Naive thymus-derived CD4-positive, alpha-beta T cell (primary cell): ENCODE measurements at regions of chr1 and their contacts with region 1.

Region 1: DNA sequence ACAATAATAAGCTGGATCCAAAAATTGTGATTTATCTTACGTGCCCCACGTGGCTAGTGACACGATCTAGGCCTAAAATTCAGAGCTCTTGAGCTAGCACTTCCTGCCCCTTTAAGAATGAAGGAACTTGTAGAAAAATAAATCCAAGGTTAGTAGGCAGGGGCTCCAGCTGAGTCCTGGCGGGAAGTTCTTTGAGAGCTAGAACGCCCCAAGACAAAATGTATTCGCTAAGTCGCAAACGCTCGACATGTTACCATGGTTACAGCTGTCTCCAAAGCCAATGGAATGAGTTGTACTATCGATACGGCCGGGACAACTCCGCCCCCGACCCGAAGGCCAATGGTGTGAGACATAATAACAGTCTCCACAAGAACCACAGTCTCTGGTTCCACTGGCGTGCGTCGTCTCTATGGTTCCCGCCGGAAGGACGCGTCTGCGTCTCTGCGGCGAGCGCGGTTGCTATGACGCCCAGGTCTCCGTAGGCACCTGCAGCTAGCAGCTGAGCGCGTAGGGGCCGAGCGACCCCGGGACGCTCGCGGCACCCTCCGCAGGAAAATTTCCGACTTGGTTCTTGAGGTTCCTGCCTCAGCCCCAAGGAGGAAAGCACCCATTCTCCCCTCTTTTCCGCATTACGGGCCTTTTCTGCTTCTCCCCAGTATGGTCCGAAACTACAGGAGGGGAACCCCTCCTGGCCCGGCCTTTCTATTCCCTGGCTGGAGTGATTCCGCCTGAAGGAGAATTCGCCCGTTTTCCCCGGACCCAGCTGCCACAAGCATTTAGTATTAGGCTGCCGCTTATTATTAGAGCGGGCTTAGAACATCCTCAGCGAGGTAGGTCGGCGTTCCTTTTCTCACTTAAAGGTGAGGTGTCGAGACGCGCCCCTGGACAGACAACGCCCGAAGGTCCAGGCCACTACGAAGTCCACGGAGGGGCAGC is at the start of gene CCDC30:
- DNase-seq: peak; percentile 75 to 99 (median 98)
- ATAC-seq: peak; percentile 99
- H3K4me3 ChIP-seq: peak within 1 kb of the TSS; percentile 50
- H3K4me3 Mint-ChIP-seq: peak within 1 kb of the TSS; percentile 74 to 92 (median 86)
- H3K27ac ChIP-seq: peak within 1 kb of the TSS; percentile 86
- H3K27ac Mint-ChIP-seq: peak within 1 kb of the TSS; percentile 87 to 98 (median 93)
- H3K4me1 ChIP-seq: peaks cover 14 to 18% of the 10 kb centered on the region in 2 donors
- H3K4me1 Mint-ChIP-seq: peaks cover 14 to 57% (median 49%) of the 10 kb centered on the region in 7 donors
- H3K27me3 ChIP-seq: no peaks in the 10 kb centered on the region
- H3K27me3 Mint-ChIP-seq: peaks cover 0 to 20% (median 0%) of the 10 kb centered on the region in 5 donors
- total RNA-seq, gene CCDC30: 2.3 to 5.3 (median 4.2) TPM

Region 2: DNA sequence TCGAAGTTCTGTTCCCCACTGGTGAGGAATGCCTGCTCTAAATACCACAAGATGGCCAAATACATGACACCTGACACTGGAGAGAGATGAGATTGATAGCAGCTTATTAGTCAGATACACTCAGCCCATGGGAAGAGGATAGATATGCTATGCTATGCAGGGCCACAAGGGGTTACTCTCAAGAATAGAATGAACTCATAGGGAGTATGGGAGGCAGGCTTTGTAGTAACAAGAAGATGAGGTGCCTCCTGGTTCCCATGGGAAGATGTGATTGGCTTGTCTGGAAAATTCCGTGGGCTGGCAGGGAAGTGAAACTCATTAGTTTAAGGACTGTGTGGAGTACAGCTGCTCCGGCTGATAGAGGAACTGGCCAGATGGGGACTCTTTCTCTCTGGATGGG is 16.5 kb after region 1 on chr1:
- CTCF ChIA-PET with region 1: no interaction called
- POLR2A ChIA-PET with region 1: no interaction called
- intact Hi-C with region 1: no loop called
- DNase-seq: no peak
- ATAC-seq: no peak
- H3K4me3 ChIP-seq: no peak overlapping the region
- H3K4me3 Mint-ChIP-seq: no peak overlapping the region
- H3K27ac ChIP-seq: no peak overlapping the region
- H3K27ac Mint-ChIP-seq: no peak overlapping the region
- H3K4me1 ChIP-seq: no peaks in the 10 kb centered on the region
- H3K4me1 Mint-ChIP-seq: peaks cover 0 to 2% (median 0%) of the 10 kb centered on the region in 7 donors
- H3K27me3 ChIP-seq: no peaks in the 10 kb centered on the region
- H3K27me3 Mint-ChIP-seq: no peaks in the 10 kb centered on the region

Region 3: DNA sequence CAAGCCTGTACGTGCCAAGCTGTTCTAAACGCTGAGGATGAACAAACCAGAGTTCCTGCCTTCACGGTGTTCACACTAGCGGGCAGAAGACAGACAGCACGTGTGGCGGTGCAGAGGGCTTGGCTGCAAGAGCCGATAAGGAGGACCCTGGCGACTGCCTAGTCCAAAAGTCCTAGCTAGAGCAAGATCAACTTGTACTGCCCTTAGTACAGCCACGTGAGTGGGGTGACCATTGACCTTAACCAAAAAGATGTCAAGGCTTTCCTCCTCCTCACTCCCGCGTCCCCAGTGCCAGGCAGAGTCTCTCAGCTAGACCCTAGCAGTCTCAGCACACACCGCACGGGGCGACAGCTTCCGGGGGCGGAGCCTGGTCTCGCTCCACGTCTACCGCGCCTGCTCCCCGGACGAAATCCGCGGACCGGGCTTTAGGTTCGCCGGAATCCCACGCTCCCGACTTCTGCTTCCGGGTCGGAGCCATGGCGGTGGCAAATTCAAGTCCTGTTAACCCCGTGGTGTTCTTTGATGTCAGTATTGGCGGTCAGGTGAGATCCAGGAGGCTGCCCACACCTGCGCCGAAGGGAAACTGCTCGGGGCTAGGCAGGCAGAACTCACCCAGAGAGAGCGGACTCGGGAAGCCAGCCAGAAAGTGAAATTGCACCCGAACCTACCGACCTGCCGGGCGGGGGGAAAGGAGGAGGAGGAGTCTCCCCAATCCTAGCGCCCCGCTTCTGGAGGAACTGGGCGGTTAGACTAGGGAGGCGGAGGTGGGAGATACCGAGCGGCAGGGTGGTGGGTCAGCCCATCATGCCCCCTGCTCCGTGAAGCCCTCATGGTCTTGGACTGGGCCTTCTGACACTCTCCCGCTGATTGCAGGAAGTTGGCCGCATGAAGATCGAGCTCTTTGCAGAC is 195.1 kb after region 1 on chr1 and contains the start of gene PPIH:
- CTCF ChIA-PET with region 1: no interaction called
- POLR2A ChIA-PET with region 1: interaction called, 4 read pairs
- intact Hi-C with region 1: loop called (anchors 1 to 2 kb)
- DNase-seq: peak; percentile 82 to 94 (median 92)
- ATAC-seq: peak; percentile 99
- H3K4me3 ChIP-seq: peak within 1 kb of the TSS; percentile 90
- H3K4me3 Mint-ChIP-seq: peak within 1 kb of the TSS; percentile 94 to 99 (median 99)
- H3K27ac ChIP-seq: peak within 1 kb of the TSS; percentile 75
- H3K27ac Mint-ChIP-seq: peak within 1 kb of the TSS; percentile 84 to 98 (median 96)
- H3K4me1 ChIP-seq: peaks cover 17 to 22% of the 10 kb centered on the region in 2 donors
- H3K4me1 Mint-ChIP-seq: peaks cover 20 to 48% (median 44%) of the 10 kb centered on the region in 7 donors
- H3K27me3 ChIP-seq: no peaks in the 10 kb centered on the region
- H3K27me3 Mint-ChIP-seq: peaks cover 0 to 3% (median 0%) of the 10 kb centered on the region in 5 donors
- total RNA-seq, gene PPIH: 28.0 to 76.8 (median 40.7) TPM

Region 4: GRCh38 chr1:42970143-42970542 is 507.0 kb after region 1 on chr1:
- CTCF ChIA-PET with region 1: no interaction called
- POLR2A ChIA-PET with region 1: no interaction called
- intact Hi-C with region 1: no loop called
- DNase-seq: no peak
- ATAC-seq: no peak
- H3K4me3 ChIP-seq: no peak overlapping the region
- H3K4me3 Mint-ChIP-seq: no peak overlapping the region
- H3K27ac ChIP-seq: no peak overlapping the region
- H3K27ac Mint-ChIP-seq: no peak overlapping the region
- H3K4me1 ChIP-seq: no peaks in the 10 kb centered on the region
- H3K4me1 Mint-ChIP-seq: no peaks in the 10 kb centered on the region
- H3K27me3 ChIP-seq: no peaks in the 10 kb centered on the region
- H3K27me3 Mint-ChIP-seq: no peaks in the 10 kb centered on the region